ENCODE measurements at regions of chr6 and their contacts with region 1.

Region 1: GRCh38 chr6:43667245-43668150 is 20.1 kb downstream of the MRPS18A start:
- DNase-seq: peak; percentile 93
- H3K4me3 ChIP-seq: peak overlapping the region in 1 of 4 donors; percentile 7
- H3K27ac ChIP-seq: peak overlapping the region in 2 of 4 donors; percentile 39 to 40
- H3K4me1 ChIP-seq: peaks cover 12 to 45% (median 33%) of the 10 kb centered on the region in 4 donors
- H3K27me3 ChIP-seq: no peaks in the 10 kb centered on the region
- CTCF ChIP-seq: peak; percentile 93 to 98 (median 95)
- EP300 ChIP-seq: no peak
- POLR2A ChIP-seq: peak; percentile 40

Region 2: GRCh38 chr6:43733471-43734293 is 66.2 kb after region 1 on chr6:
- in situ Hi-C with region 1: no loop called
- intact Hi-C with region 1: no loop called
- DNase-seq: no peak
- H3K4me3 ChIP-seq: no peak overlapping the region
- H3K27ac ChIP-seq: peak overlapping the region in 1 of 4 donors; percentile 36
- H3K4me1 ChIP-seq: peaks cover 0 to 17% (median 5%) of the 10 kb centered on the region in 4 donors
- H3K27me3 ChIP-seq: no peaks in the 10 kb centered on the region
- CTCF ChIP-seq: no peak
- EP300 ChIP-seq: no peak
- POLR2A ChIP-seq: no peak

Region 3: GRCh38 chr6:43758617-43759050 is 91.1 kb after region 1 on chr6:
- in situ Hi-C with region 1: loop called in 3 of 4 experiments (anchors 10 to 25 kb)
- intact Hi-C with region 1: loop called (anchors 5 kb)
- DNase-seq: no peak
- H3K4me3 ChIP-seq: no peak overlapping the region
- H3K27ac ChIP-seq: no peak overlapping the region
- H3K4me1 ChIP-seq: no peaks in the 10 kb centered on the region
- H3K27me3 ChIP-seq: no peaks in the 10 kb centered on the region
- CTCF ChIP-seq: peak; percentile 59 to 73 (median 65)
- EP300 ChIP-seq: no peak
- POLR2A ChIP-seq: no peak

Region 4: DNA sequence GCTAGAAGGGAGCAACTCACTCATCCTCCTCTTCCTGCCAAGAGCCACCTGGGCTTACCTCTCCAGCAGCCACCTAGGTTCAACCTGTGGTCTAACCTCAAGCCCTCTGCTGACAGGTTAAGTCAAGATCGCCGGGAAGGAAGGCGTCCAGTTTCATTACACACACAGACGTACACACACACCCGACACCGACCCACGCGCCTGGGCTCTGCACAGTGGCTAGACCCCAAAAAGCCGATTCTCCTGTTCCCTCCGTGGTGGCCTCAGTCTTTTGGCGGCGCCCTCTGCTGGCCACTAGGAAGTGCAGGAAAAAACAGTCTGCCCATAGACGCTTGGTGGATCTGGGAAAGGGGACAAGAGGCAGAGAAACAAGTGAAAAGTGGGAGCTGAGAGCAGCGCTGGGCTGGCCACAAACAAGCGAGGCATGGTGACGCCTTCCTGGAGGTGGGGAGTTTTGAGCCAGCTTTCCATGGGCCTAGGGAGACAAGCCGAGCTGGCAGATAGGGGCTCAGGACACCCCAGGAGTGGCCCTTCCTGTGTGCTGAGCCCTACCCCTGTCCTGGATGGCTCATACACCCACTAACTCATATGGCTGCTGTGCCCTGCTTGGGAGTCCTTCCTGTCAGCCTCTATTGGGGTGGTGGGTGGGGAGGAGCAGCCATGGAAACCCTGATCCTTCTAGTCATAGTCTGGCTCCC is 407.1 kb after region 1 on chr6:
- in situ Hi-C with region 1: loop called in 2 of 4 experiments (anchors 25 kb)
- intact Hi-C with region 1: loop called (anchors 5 kb)
- DNase-seq: peak; percentile 64
- H3K4me3 ChIP-seq: peak overlapping the region in 1 of 4 donors; percentile 54
- H3K27ac ChIP-seq: peak overlapping the region in 3 of 4 donors; percentile 75 to 82 (median 78)
- H3K4me1 ChIP-seq: peaks cover 15 to 62% (median 40%) of the 10 kb centered on the region in 4 donors
- H3K27me3 ChIP-seq: peaks cover 3% of the 10 kb centered on the region
- CTCF ChIP-seq: peak; percentile 86 to 94 (median 88)
- EP300 ChIP-seq: no peak
- POLR2A ChIP-seq: no peak

Region 5: DNA sequence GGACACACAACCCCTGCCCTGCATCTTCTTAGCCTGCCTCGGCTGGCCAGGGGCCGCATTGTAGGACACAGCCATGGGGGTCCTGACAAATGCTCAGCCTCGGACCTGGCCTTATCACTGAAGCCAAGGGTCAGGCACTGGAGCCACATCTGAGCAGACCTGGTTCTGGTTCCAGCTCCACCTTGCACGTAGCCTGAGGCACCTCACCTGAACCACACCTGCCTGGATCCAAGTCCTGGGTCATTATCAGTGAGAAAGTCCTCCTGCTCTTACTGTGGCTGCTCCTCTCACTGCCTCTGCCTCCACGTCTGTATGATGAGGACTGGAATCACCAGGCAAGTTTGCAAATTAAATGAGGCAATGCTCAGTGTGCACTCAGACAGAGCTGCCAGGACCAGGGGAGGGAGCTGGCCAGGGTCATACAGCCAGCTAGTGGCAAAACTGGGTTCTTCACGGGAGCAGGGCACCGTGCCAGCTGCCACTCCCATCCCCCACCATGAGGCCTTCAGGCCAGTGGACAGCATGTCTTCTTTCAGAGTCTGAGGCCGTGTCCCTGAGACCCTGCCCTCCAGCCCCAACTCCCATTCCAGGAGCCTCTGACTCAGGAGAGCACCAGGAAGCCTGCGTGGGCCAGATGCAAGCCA is 419.6 kb after region 1 on chr6:
- in situ Hi-C with region 1: loop called in 3 of 4 experiments (anchors 10 to 25 kb)
- intact Hi-C with region 1: no loop called
- DNase-seq: no peak
- H3K4me3 ChIP-seq: no peak overlapping the region
- H3K27ac ChIP-seq: no peak overlapping the region
- H3K4me1 ChIP-seq: no peaks in the 10 kb centered on the region
- H3K27me3 ChIP-seq: no peaks in the 10 kb centered on the region
- CTCF ChIP-seq: no peak
- EP300 ChIP-seq: no peak
- POLR2A ChIP-seq: no peak

Region 6: DNA sequence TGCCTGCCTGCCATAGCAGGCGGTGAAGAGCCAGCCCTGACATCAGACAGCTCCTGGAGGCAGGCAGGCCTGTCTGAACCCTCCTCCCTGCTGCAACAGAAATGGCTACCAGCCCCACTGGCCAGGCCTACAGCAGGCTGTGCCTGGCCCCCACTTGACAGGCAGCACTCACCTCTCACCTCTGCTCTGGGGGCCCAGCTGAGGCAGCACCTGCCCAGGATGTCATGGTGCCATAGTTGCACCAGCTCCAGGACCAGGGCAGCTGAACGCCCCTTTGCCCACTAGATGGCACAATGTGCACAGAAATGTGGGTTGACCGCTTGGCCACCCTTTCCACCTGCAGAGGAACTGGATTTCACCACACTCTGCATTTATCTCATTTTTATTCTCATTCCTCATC is 429.1 kb after region 1 on chr6:
- in situ Hi-C with region 1: loop called in 2 of 4 experiments (anchors 25 kb)
- intact Hi-C with region 1: no loop called
- DNase-seq: peak; percentile 81
- H3K4me3 ChIP-seq: no peak overlapping the region
- H3K27ac ChIP-seq: no peak overlapping the region
- H3K4me1 ChIP-seq: peaks cover 0 to 16% (median 10%) of the 10 kb centered on the region in 4 donors
- H3K27me3 ChIP-seq: no peaks in the 10 kb centered on the region
- CTCF ChIP-seq: peak; percentile 75 to 87 (median 84)
- EP300 ChIP-seq: no peak
- POLR2A ChIP-seq: no peak

Measured in transverse colon (tissue), 4 donors.